ENCODE measurements at regions of chr5 and their contacts with region 1.

Region 1: DNA sequence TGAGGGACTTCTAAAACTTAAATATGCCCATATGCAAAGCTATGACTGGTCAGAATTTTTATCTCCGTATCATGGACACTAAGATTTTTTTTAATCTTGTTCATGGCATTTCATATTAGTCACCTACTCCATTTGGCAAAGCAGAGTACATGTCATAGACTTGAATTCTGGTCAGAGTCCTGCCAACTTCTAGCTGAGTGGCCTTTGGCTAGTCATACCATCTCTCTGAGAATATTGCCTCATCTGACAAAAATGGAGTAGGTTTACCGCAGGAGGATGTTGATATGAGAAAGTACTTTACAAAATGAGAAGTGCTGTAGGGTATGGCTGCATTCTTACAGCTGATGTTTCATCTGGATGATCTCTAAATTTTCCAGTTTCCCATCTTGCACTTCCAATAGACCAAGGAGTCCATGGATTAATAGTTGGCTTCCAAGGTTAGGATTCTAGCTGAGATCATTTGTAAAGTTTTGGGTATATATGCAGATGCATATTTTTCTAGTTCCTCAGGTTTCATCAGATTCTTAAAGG is 150.8 kb upstream of the NR3C1 start:
- DNase-seq: peak; percentile 99
- H3K4me3 Mint-ChIP-seq: peak overlapping the region; percentile 0
- H3K27ac Mint-ChIP-seq: peak overlapping the region; percentile 81
- H3K4me1 Mint-ChIP-seq: peaks cover 41% of the 10 kb centered on the region
- H3K27me3 Mint-ChIP-seq: no peaks in the 10 kb centered on the region
- CTCF ChIP-seq: no peak

Region 2: DNA sequence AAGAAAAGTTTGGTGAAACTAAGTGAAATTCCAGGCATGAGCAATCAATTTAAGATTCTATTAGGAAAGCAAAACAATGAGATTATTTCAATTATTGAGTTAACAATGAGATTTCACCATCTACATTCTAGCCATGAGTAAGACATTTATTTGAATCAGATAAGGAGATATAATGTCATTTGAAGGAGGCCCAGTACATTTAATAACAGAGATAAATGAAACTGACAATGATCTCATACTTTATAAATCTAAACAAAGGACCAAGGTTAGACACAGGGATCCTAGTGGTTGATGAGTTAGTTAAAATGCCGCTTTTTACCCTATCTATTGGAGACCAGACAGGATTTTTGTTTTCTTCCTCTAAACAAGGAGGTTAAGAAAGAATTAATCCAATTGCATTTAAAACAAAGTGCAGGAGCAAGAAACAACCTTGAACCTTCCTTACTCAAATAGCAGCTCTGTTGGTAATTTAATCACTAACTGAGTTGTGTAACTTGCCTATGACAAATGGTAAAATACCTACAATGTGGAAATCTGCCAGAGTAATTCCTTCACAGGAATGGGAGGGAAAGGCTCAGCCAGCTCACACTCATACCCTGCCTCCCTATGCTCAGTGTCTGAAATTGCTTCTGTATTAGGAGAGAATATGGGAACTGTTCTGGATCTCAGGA is 47.2 kb before region 1 on chr5:
- CTCF ChIA-PET with region 1: interaction called, 5 read pairs
- POLR2A ChIA-PET with region 1: interaction called, 21 read pairs
- intact Hi-C with region 1: no loop called
- DNase-seq: peak; percentile 98
- H3K4me3 Mint-ChIP-seq: peak overlapping the region; percentile 44
- H3K27ac Mint-ChIP-seq: peak overlapping the region; percentile 84
- H3K4me1 Mint-ChIP-seq: peaks cover 41% of the 10 kb centered on the region
- H3K27me3 Mint-ChIP-seq: no peaks in the 10 kb centered on the region
- CTCF ChIP-seq: peak; percentile 16

Region 3: DNA sequence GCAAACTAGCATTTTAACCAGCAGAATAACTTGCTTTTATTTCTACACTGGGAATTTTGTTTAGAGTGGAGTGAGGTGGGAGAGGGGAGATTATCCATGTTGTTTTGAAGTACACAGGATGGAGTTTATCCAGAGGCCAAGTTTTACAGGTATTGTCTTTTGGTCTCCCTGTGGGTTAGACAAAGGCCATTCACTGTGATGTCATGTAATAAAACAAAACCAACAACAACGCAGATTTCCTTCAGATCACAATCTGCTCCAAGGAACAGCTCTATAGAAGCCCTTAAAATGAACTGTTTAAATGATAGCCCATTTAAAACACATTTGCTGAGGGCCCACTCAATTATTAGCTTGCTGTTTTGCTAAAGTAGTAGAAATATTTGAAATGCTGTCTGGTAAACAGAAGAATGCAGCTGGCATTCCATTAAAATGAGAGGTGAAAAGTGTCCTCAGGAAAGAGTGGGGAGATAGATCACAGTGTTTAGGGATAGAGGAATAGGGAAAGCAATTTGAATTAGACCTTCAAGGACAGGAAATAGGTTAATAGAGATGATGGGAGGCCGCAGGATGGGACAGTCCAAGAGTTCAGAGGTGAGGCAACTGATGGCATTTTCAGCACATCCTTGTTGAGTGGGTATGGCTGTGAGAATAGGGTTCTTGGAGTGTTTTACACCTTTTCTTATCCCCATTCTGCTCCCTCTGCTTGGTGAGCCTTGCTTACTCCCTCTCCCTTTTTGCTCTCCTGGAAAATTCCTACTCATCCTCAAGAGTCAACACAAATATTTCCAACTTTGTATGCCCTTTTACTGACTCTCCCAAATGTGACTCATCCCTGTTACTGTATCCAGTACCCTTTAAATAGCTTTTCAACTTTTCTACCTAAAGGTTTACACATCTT is 10.6 kb before region 1 on chr5:
- CTCF ChIA-PET with region 1: interaction called, 8 read pairs
- POLR2A ChIA-PET with region 1: interaction called, 19 read pairs
- intact Hi-C with region 1: no loop called
- DNase-seq: peak; percentile 70
- H3K4me3 Mint-ChIP-seq: no peak overlapping the region
- H3K27ac Mint-ChIP-seq: no peak overlapping the region
- H3K4me1 Mint-ChIP-seq: peaks cover 24% of the 10 kb centered on the region
- H3K27me3 Mint-ChIP-seq: no peaks in the 10 kb centered on the region
- CTCF ChIP-seq: no peak

Region 4: DNA sequence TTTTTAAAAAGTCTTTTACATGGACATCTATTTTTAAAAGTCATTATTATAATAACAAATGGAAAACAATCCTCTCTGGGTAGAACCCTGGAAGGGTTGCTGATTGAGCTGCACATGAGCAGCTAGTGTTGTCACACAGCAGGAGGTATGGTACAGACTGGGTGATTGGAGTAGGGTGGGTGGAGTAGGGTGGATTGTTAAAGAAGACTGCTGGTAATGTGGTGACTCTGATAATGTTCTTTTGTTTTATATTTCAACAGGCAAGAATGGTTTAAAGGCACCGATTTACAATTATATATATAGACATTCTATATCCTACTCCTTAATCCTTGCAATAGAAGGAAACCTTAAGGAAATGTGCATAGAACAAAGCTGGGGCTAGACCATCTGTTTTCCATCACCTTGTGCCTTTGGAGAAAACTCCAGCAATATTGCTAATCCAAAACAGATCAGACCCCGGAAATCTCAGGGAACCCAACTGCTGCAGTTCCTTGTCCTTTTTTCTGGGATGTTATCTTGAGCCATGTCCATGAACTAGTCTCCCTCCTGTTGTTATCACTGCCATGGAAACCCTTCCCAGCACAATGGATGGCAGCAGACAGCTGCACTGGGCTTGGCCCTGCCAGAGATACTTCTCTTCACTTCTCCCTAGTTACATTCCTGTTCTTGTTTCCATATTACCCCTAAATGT is 486.5 kb after region 1 on chr5:
- CTCF ChIA-PET with region 1: no interaction called
- POLR2A ChIA-PET with region 1: no interaction called
- intact Hi-C with region 1: no loop called
- DNase-seq: no peak
- H3K4me3 Mint-ChIP-seq: no peak overlapping the region
- H3K27ac Mint-ChIP-seq: no peak overlapping the region
- H3K4me1 Mint-ChIP-seq: no peaks in the 10 kb centered on the region
- H3K27me3 Mint-ChIP-seq: no peaks in the 10 kb centered on the region
- CTCF ChIP-seq: no peak